Ascending aorta (tissue), 2 donors: ENCODE measurements at regions of chr14 and their contacts with region 1.

Region 1: DNA sequence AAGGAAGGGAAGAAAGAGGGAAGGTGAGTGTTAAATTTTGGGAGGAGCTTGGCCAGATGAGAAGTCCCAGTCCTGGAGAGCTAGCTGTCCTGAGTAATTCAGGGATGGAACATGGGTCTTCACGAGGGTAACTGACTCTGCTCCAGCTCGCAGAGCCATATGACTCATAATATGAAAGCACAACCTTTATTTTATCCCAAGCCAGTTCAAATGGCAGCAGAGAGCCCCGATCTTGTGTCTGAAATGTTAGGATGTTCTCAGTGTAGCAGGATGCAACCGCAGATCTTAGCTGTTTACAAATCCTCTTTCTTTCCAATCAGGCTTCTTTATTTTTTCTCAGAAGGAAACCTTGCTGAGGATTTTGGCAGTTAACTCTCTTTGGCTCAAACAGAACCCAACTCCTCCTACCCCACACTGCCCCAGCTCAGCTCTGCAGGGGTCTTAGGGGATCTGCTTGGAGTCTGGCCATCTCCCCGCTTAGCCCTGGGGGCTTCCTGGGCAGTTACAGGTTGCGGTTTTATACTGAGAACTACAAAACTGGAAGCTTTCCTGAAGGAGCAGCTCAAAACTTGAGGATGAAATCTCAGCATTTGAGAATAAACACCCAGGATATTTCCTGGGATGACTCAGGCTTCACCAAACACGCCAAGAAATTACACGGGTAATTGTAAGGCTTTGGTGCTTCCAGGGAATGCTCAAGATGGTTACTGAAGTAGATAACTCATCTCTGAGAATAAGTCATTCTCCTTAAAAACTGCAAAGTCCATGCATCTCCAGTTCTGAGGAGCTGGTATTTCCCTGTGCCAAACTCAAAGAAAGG is 92.5 kb downstream of the VCPKMT start:
- DNase-seq: peak in 1 of 2 donors; percentile 74
- H3K4me3 ChIP-seq: peak overlapping the region in 1 of 2 donors; percentile 9
- H3K27ac ChIP-seq: peak overlapping the region; percentile 70 to 78
- H3K4me1 ChIP-seq: peaks cover 7 to 35% of the 10 kb centered on the region in 2 donors
- H3K27me3 ChIP-seq: no peaks in the 10 kb centered on the region
- CTCF ChIP-seq: no peak

Region 2: DNA sequence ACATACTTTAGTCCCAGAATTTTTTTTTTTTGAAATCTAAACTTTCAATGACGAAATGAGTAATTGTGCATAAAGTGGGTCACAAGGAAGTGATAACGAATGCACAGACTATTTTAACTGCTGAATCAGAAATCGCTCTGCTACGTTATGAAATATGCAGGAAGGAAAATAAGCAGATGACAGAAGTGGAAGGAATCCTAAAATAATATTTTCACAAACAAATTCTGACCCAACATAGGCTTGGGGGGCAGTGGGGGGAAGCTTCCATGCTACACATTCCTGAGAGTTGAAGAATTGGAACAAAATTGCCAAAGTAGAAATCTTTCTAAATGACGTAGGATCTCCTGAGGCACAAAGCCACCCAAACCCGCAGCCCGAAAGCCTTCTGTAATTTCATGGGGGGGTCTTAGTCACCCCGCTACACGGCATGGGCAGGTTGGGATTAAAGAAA is 41.4 kb before region 1 on chr14:
- intact Hi-C with region 1: loop called (anchors 2 kb)
- DNase-seq: peak in 1 of 2 donors; percentile 86
- H3K4me3 ChIP-seq: peak overlapping the region; percentile 36 to 53
- H3K27ac ChIP-seq: peak overlapping the region; percentile 80 to 89
- H3K4me1 ChIP-seq: peaks cover 6 to 25% of the 10 kb centered on the region in 2 donors
- H3K27me3 ChIP-seq: no peaks in the 10 kb centered on the region
- CTCF ChIP-seq: no peak

Region 3: GRCh38 chr14:50099335-50099734 is 75.5 kb after region 1 on chr14:
- intact Hi-C with region 1: no loop called
- DNase-seq: no peak
- H3K4me3 ChIP-seq: no peak overlapping the region
- H3K27ac ChIP-seq: no peak overlapping the region
- H3K4me1 ChIP-seq: no peaks in the 10 kb centered on the region
- H3K27me3 ChIP-seq: no peaks in the 10 kb centered on the region
- CTCF ChIP-seq: no peak